Mammary epithelial cell (primary cell): ENCODE measurements at regions of chr7 and their contacts with region 1.

Region 1: GRCh38 chr7:131107337-131108211 is 220.1 kb upstream of the MKLN1 start:
- DNase-seq: peak; percentile 63
- H3K4me3 ChIP-seq: peak overlapping the region; percentile 75 to 86 (median 75)
- H3K27ac ChIP-seq: peak overlapping the region; percentile 76
- H3K4me1 ChIP-seq: peaks cover 53% of the 10 kb centered on the region
- H3K27me3 ChIP-seq: no peaks in the 10 kb centered on the region
- CTCF ChIP-seq: no peak

Region 2: GRCh38 chr7:130822642-130823041 is 284.9 kb before region 1 on chr7:
- CTCF ChIA-PET with region 1: no interaction called
- dilution Hi-C with region 1: no loop called
- in situ Hi-C with region 1: no loop called
- intact Hi-C with region 1: no loop called
- DNase-seq: peak; percentile 60
- H3K4me3 ChIP-seq: no peak overlapping the region
- H3K27ac ChIP-seq: no peak overlapping the region
- H3K4me1 ChIP-seq: no peaks in the 10 kb centered on the region
- H3K27me3 ChIP-seq: no peaks in the 10 kb centered on the region
- CTCF ChIP-seq: no peak

Region 3: GRCh38 chr7:130929896-130930659 is 177.5 kb before region 1 on chr7:
- CTCF ChIA-PET with region 1: no interaction called
- dilution Hi-C with region 1: no loop called
- in situ Hi-C with region 1: no loop called
- intact Hi-C with region 1: no loop called
- DNase-seq: no peak
- H3K4me3 ChIP-seq: no peak overlapping the region
- H3K27ac ChIP-seq: no peak overlapping the region
- H3K4me1 ChIP-seq: no peaks in the 10 kb centered on the region
- H3K27me3 ChIP-seq: no peaks in the 10 kb centered on the region
- CTCF ChIP-seq: no peak

Region 4: DNA sequence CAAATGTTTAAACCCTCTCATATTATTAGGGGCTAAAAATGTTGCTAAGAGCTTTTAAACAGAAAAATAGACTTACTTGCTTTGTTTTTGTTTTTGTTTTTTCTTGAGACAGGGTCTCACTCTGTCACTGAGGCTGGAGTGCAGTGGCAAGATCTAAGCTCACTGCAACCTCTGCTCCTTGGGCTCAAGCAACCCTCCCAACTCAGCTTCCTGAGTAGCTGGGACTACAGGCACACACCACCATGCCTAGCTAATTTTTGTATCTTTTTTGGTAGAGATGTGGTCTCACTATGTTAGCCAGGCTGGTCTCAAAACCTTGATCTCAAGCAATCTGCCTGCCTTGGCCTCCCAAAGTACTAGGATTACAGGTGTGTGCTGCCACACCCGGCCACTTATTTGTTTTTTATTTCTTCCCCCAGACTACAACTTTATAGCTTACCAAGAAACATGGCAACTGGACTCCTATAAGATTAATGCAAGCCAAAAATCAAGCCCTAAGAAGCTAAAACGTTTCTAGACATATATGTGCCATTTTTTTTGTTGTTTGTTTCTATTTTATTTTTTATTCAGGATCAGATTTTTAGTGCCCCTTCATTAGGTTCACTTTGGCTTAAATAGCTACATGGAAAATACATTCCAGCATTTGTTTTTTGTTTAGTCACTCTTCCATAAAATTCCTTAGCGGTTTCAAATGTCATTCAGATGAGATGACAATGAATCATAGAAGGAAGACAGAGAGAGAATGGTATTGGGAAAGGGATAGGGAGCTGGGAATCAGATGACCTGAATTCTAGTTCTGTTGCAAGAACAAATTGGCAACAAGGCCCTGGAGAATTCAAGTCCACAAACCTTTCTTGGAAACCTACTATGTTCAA is 56.7 kb after region 1 on chr7:
- CTCF ChIA-PET with region 1: no interaction called
- dilution Hi-C with region 1: no loop called
- in situ Hi-C with region 1: no loop called
- intact Hi-C with region 1: loop called (anchors 1 kb)
- DNase-seq: peak; percentile 78
- H3K4me3 ChIP-seq: no peak overlapping the region
- H3K27ac ChIP-seq: peak overlapping the region; percentile 86
- H3K4me1 ChIP-seq: peaks cover 15% of the 10 kb centered on the region
- H3K27me3 ChIP-seq: no peaks in the 10 kb centered on the region
- CTCF ChIP-seq: no peak

Region 5: DNA sequence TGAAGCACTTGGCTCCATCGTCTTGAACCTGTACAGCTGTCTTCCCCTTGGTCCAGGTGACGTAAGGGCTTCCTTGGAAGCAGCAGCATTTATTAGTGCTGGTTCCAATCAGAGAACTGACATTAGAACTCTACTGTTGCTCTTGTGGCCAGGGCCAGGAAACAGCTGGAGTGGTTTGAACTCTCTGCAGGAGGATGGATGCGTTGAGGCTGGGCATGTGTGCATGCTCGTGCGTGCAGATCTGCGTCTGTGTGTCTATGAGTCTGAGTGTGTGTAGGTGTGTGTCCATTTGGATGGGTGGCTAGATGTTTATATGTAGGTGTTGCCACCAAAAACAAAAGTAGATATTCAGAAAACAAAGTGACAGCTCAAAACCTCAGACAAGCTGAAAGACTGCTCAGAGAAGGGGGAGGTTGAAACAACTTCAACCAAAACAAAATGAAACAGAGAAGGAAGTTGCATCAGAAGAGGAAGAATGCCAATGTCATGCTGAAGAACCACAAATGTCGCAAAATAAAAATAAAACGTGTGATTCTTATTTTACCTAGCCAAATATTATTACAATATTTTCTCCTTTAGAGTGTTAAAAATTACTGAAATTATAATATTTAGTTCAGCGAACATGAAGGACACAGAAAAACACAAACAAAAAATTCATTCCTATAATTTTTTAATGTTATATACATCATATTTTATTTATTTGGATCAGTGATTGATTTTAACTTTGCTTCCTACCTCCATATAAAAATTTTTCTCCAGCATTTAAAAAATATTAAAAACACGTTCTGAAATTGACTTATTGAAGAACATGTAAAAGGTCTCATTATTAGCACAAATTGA is 124.0 kb after region 1 on chr7:
- CTCF ChIA-PET with region 1: no interaction called
- dilution Hi-C with region 1: no loop called
- in situ Hi-C with region 1: no loop called
- intact Hi-C with region 1: loop called (anchors 2 kb)
- DNase-seq: no peak
- H3K4me3 ChIP-seq: no peak overlapping the region
- H3K27ac ChIP-seq: no peak overlapping the region
- H3K4me1 ChIP-seq: peaks cover 12% of the 10 kb centered on the region
- H3K27me3 ChIP-seq: no peaks in the 10 kb centered on the region
- CTCF ChIP-seq: no peak

Region 6: GRCh38 chr7:131302876-131303707 is 195.5 kb after region 1 on chr7:
- CTCF ChIA-PET with region 1: interaction called, 3 read pairs
- dilution Hi-C with region 1: no loop called
- in situ Hi-C with region 1: loop called in 1 of 2 experiments (anchors 25 kb)
- intact Hi-C with region 1: loop called (anchors 1 kb)
- DNase-seq: peak; percentile 38
- H3K4me3 ChIP-seq: no peak overlapping the region
- H3K27ac ChIP-seq: no peak overlapping the region
- H3K4me1 ChIP-seq: no peaks in the 10 kb centered on the region
- H3K27me3 ChIP-seq: no peaks in the 10 kb centered on the region
- CTCF ChIP-seq: peak; percentile 73 to 86

Region 7: DNA sequence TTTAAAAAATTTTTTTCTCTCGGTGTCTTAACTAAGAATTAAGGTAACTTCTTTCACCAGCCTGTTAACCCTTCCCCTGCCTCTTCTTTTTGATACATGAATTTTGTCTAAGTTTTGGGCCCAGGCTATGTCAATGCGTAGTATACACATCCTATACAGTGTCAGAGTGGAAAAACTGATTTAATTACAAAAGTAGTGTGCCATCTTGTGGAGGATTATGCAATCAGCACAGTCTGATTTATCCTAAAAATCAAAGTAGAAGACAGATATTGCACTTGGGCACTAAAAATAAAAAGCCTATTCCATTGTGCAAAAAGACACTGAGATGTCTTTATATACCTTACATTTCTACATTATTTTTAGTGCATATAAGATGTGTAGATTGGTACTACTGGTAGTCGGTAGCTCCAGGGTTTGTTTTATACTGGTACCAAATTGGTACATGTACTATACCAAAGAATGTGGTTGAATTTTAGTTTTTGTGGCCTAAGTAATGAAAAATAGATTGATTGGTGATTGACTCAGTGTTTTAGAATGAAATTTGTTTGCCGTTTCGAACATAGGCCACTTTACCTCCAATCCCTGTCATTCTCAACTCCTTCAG is 316.7 kb after region 1 on chr7:
- CTCF ChIA-PET with region 1: no interaction called
- dilution Hi-C with region 1: no loop called
- in situ Hi-C with region 1: no loop called
- intact Hi-C with region 1: loop called (anchors 2 kb)
- DNase-seq: peak; percentile 11
- H3K4me3 ChIP-seq: no peak overlapping the region
- H3K27ac ChIP-seq: no peak overlapping the region
- H3K4me1 ChIP-seq: no peaks in the 10 kb centered on the region
- H3K27me3 ChIP-seq: no peaks in the 10 kb centered on the region
- CTCF ChIP-seq: peak; percentile 32 to 47